HEK293 (cell line): ENCODE measurements at regions of chr14 and their contacts with region 1.

Region 1: GRCh38 chr14:70073924-70074566 is 114.7 kb downstream of the SLC8A3 start:
- H3K4me3 ChIP-seq: no peak overlapping the region
- H3K27ac ChIP-seq: no peak overlapping the region
- H3K4me1 ChIP-seq: no peaks in the 10 kb centered on the region
- CTCF ChIP-seq: 0 out of 2 replicates have a peak, but pooled peaks have one; percentile 31

Region 2: GRCh38 chr14:69818757-69819191 is 255.3 kb before region 1 on chr14:
- CTCF ChIA-PET with region 1: interaction called, 42 read pairs
- POLR2A ChIA-PET with region 1: no interaction called
- H3K4me3 ChIP-seq: no peak overlapping the region
- H3K27ac ChIP-seq: no peak overlapping the region
- H3K4me1 ChIP-seq: no peaks in the 10 kb centered on the region
- CTCF ChIP-seq: peak; percentile 55; the same call in 1 of the 2 replicates

Region 3: DNA sequence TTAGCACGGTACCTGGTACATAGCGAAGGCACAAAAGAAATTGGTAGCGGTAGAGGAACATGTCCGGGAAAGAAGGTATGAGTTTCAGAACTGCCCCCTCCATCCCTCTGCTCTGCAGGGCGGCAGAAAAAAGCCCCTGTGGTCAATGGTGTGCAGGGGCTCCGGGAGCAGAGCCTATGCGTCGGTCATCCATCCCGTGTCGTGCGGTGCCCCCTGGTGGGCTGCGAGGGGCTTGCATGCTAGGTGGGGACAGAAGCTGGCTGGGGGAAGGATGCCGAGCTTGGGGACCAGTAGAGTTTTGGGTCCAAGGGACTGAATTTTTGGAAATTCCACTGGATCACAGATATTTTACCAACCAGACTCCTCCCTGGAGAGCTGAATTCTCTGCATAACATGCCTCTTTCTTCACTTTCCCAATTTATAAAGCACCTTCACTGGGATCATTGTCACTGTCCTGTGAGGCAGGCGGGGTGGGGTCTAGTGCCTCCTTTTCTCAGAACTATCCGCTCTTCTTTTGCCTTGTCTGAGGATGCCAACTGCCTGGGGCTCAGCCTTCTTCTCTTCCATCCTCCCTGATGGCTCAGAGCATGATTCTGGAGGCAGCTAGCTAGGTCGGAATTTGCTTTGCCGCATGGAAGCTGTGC is 46.1 kb before region 1 on chr14:
- CTCF ChIA-PET with region 1: interaction called, 17 read pairs
- POLR2A ChIA-PET with region 1: no interaction called
- H3K4me3 ChIP-seq: no peak overlapping the region
- H3K27ac ChIP-seq: no peak overlapping the region
- H3K4me1 ChIP-seq: no peaks in the 10 kb centered on the region
- CTCF ChIP-seq: peak; percentile 75; the same call in 1 of the 2 replicates

Region 4: DNA sequence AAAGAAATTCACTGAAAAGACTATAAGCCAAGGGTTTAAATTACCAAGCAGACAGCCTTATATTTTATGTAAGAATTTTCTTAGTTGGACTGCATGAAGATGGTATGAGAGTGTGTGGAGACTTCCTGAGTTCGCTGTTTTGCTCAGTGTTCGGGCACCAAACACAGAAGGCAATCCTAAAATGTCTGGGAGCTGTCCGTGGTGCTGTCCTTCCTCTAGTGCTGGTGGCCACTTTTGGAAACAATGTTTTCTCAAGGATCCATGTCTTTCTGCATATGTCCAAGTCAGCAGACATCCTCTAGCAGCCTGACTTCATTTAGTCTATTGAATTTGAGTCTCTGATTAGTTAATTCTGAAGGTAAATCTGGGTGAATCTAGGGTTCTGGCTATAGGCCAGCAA is 21.1 kb before region 1 on chr14:
- CTCF ChIA-PET with region 1: interaction called, 12 read pairs
- POLR2A ChIA-PET with region 1: no interaction called
- H3K4me3 ChIP-seq: no peak overlapping the region
- H3K27ac ChIP-seq: no peak overlapping the region
- H3K4me1 ChIP-seq: no peaks in the 10 kb centered on the region
- CTCF ChIP-seq: no peak

Region 5: GRCh38 chr14:70640938-70641547 is 567.0 kb after region 1 on chr14:
- CTCF ChIA-PET with region 1: no interaction called
- POLR2A ChIA-PET with region 1: no interaction called
- H3K4me3 ChIP-seq: peak overlapping the region; percentile 71
- H3K27ac ChIP-seq: peak overlapping the region; percentile 74; the same call in 1 of the 2 replicates
- H3K4me1 ChIP-seq: peaks cover 9% of the 10 kb centered on the region; the same call in 1 of the 2 replicates
- CTCF ChIP-seq: no peak